ENCODE measurements at regions of chr14 and their contacts with region 1.

Region 1: DNA sequence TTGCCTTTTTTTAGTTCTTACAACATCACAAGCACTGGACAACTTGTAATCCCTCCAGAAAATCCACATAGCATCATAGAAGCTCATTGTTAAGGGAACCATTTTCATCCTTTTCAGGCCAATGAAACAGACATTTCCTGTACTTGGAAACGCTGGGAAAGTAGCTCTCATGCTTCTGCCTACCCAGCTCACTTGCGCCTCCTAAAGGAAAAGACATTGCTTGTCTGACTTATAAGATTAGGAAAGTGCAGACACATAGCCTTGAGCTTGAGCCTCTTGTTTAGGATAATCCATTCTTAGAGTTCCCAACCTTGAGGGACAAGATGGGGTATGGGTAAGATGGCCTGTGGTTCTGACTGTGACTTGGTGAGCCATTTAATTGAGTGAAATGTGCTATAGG is 589.5 kb downstream of the NOVA1 start:
- DNase-seq: peak; percentile 48
- H3K4me3 ChIP-seq: no peak overlapping the region
- H3K27ac ChIP-seq: no peak overlapping the region
- H3K4me1 ChIP-seq: no peaks in the 10 kb centered on the region
- H3K27me3 ChIP-seq: no peaks in the 10 kb centered on the region
- CTCF ChIP-seq: peak; percentile 34 to 44
- POLR2A ChIP-seq: no peak

Region 2: GRCh38 chr14:25411781-25412757 is 596.2 kb before region 1 on chr14:
- CTCF ChIA-PET with region 1: interaction called, 10 read pairs
- POLR2A ChIA-PET with region 1: no interaction called
- dilution Hi-C with region 1: no loop called
- intact Hi-C with region 1: no loop called
- DNase-seq: no peak
- H3K4me3 ChIP-seq: no peak overlapping the region
- H3K27ac ChIP-seq: no peak overlapping the region
- H3K4me1 ChIP-seq: no peaks in the 10 kb centered on the region
- H3K27me3 ChIP-seq: no peaks in the 10 kb centered on the region
- CTCF ChIP-seq: peak; percentile 5 to 16
- POLR2A ChIP-seq: no peak

Region 3: GRCh38 chr14:25431211-25432048 is 576.9 kb before region 1 on chr14:
- CTCF ChIA-PET with region 1: interaction called, 12 read pairs
- POLR2A ChIA-PET with region 1: no interaction called
- dilution Hi-C with region 1: no loop called
- intact Hi-C with region 1: no loop called
- DNase-seq: no peak
- H3K4me3 ChIP-seq: no peak overlapping the region
- H3K27ac ChIP-seq: no peak overlapping the region
- H3K4me1 ChIP-seq: no peaks in the 10 kb centered on the region
- H3K27me3 ChIP-seq: no peaks in the 10 kb centered on the region
- CTCF ChIP-seq: no peak
- POLR2A ChIP-seq: no peak

Region 4: DNA sequence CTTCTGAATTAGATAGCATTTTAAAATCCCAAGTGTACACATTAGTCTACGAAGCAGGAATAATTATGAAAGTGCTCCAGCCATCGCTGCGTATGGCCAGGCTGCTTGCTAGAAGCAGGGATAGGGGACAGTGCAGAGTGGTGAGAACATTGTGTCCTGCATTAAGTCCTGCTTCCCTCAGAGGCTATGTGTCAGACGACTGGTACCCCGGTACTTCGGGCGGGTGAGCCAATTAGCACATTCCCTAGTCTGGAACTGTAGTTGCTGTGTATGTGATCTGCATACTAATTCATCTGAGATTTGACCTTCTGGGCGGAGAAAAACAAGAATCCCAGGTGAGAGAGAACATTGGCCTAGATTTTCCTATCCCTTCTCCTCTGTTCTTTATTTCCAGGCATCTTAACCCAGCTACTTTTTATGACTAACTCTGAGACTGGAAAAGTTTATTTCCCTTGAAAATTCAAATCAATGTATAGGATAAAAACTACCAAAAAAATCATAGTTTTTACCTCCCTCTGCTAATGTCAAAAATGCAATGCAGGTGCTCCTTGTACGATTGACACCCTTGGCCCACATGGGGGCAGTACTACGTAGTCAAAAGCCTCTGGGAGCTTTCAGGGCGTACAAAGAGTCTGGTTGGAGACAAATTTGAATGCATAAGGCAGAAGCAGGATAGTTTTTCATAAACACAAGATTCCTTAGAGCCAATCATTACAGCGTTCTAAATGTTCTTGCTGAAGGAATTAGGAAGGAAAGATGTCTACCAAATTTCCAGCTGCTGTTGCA is 174.8 kb before region 1 on chr14:
- CTCF ChIA-PET with region 1: interaction called, 78 read pairs
- POLR2A ChIA-PET with region 1: no interaction called
- dilution Hi-C with region 1: no loop called
- intact Hi-C with region 1: loop called (anchors 1 kb)
- DNase-seq: peak; percentile 46
- H3K4me3 ChIP-seq: no peak overlapping the region
- H3K27ac ChIP-seq: no peak overlapping the region
- H3K4me1 ChIP-seq: no peaks in the 10 kb centered on the region
- H3K27me3 ChIP-seq: no peaks in the 10 kb centered on the region
- CTCF ChIP-seq: peak; percentile 52 to 55
- POLR2A ChIP-seq: no peak

Region 5: DNA sequence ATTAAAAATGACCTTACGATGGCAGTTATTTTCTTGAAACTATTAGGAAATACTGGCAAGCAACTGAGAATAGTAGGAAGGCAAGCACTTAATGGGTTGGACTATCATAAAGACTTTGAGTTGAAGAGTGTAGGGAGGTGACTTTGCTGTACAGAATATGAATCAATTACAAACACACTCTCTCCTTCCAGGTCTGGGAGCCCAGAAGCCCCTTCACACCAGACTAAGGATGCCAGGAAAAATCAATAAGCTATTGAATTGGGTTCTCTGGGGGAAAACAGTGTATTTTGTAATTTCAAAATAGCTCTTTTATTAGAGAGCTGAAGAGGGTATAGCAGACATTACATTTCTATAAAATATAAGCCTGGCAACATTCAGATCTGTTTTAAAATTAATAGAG is 146.9 kb before region 1 on chr14:
- CTCF ChIA-PET with region 1: no interaction called
- POLR2A ChIA-PET with region 1: no interaction called
- dilution Hi-C with region 1: no loop called
- intact Hi-C with region 1: no loop called
- DNase-seq: no peak
- H3K4me3 ChIP-seq: no peak overlapping the region
- H3K27ac ChIP-seq: no peak overlapping the region
- H3K4me1 ChIP-seq: no peaks in the 10 kb centered on the region
- H3K27me3 ChIP-seq: no peaks in the 10 kb centered on the region
- CTCF ChIP-seq: no peak
- POLR2A ChIP-seq: no peak

Region 6: DNA sequence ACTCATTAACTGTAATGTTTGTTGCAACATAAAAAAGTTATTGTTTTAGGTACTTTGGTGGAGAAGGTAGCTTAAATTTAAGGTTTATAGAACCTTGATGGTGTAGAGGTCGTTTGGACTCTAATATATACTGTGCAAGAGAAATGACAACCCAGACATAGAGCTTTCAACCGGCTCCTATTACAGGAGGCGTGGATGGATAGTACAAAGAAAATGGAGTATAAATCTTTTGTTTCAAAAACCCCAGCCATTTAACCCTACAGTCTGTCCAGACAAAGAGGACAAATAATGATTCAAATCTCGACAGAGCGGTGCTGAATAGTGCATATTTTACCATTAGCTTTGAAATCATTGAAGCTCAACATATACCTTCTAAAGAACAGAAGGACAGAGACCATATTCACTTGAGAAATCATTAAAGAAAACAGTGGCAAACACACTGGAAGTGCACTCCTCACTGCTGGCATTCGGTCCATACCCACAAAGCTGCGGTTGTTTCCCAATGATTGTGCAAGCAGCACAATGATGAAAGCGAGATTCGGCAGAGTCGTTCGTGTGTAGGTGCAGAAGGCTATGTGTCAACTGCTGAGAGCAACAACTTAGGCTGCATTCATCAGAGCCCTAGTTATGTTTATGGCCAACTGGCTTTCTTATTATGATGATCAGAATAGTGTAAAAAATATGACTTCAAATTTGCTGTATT is 99.1 kb before region 1 on chr14:
- CTCF ChIA-PET with region 1: no interaction called
- POLR2A ChIA-PET with region 1: no interaction called
- dilution Hi-C with region 1: no loop called
- intact Hi-C with region 1: no loop called
- DNase-seq: no peak
- H3K4me3 ChIP-seq: no peak overlapping the region
- H3K27ac ChIP-seq: no peak overlapping the region
- H3K4me1 ChIP-seq: no peaks in the 10 kb centered on the region
- H3K27me3 ChIP-seq: no peaks in the 10 kb centered on the region
- CTCF ChIP-seq: no peak
- POLR2A ChIP-seq: no peak

Region 7: GRCh38 chr14:25953532-25954139 is 54.7 kb before region 1 on chr14:
- CTCF ChIA-PET with region 1: interaction called, 13 read pairs
- POLR2A ChIA-PET with region 1: no interaction called
- dilution Hi-C with region 1: no loop called
- intact Hi-C with region 1: no loop called
- DNase-seq: peak; percentile 91
- H3K4me3 ChIP-seq: peak overlapping the region in 2 of 3 experiments; percentile 27 to 29
- H3K27ac ChIP-seq: peak overlapping the region; percentile 78
- H3K4me1 ChIP-seq: peaks cover 19% of the 10 kb centered on the region
- H3K27me3 ChIP-seq: no peaks in the 10 kb centered on the region
- CTCF ChIP-seq: no peak
- POLR2A ChIP-seq: no peak

Region 8: DNA sequence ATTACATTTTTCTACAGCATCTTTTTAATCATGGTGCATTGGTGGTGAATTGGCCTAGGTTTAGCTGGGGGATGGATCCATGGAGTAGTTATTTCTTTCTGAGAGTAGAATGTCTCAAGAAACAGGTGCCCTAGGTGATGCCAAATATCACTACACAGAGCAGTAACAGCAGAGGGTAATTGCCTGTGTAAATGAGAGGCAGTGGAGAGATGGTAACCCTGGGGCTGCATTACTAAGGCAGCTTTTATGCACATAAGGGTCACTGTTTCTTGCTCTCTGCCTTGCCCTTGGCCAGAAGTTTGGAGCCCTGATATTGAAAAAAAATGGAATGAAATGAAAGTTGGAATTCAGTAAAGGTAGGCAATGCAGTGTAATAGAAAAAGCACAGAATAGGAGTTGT is 14.5 kb before region 1 on chr14:
- CTCF ChIA-PET with region 1: interaction called, 11 read pairs
- POLR2A ChIA-PET with region 1: no interaction called
- dilution Hi-C with region 1: no loop called
- intact Hi-C with region 1: no loop called
- DNase-seq: no peak
- H3K4me3 ChIP-seq: no peak overlapping the region
- H3K27ac ChIP-seq: no peak overlapping the region
- H3K4me1 ChIP-seq: no peaks in the 10 kb centered on the region
- H3K27me3 ChIP-seq: no peaks in the 10 kb centered on the region
- CTCF ChIP-seq: no peak
- POLR2A ChIP-seq: no peak